AG04450 (cell line): ENCODE measurements at regions of chr12 and their contacts with region 1.

Region 1: DNA sequence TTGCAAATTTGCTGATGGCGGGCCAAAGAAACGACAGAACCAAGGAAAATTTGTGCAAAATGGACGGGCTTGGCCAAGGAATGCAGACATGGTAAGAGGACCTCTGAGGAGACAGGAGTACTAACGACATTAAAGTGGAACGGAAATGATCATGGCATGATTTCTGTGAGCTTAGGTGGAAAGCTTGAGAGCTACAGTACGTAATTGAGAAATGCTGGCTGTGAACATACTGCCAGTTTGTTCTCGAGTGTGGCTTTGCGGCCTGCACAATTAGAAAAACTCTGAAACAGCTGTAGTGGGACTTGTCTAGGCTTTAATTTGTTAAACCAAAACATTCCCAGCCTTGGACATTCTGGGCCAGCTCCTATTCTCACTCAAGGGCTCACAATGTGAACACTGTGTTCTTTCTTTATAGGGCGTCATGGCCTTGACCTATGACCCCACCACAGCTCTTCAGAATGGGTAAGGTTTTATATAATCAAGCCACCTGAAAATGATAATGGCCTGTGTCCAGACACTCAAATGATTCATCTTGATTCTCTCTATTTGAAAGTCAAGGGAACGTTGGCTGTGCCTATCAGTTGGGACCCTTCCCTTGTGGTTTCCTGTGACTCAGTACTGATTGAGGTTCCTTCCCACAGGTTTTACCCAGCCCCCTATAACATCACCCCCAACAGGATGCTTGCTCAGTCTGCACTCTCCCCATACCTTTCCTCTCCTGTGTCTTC is 48.5 kb downstream of the BAZ2A start:
- DNase-seq: no peak
- H3K4me3 ChIP-seq: no peak overlapping the region
- H3K27ac ChIP-seq: peak overlapping the region; percentile 31
- H3K27me3 ChIP-seq: no peaks in the 10 kb centered on the region
- CTCF ChIP-seq: no peak

Region 2: GRCh38 chr12:56593909-56594621 is 12.5 kb after region 1 on chr12:
- CTCF ChIA-PET with region 1: interaction called, 14 read pairs
- POLR2A ChIA-PET with region 1: no interaction called
- DNase-seq: peak; percentile 55
- H3K4me3 ChIP-seq: no peak overlapping the region
- H3K27ac ChIP-seq: peak overlapping the region; percentile 63
- H3K27me3 ChIP-seq: no peaks in the 10 kb centered on the region
- CTCF ChIP-seq: peak; percentile 94